ENCODE measurements at regions of chr2 and their contacts with region 1.

Region 1: GRCh38 chr2:113756355-113757137 is at the start of gene SLC35F5:
- DNase-seq: peak; percentile 98
- H3K4me3 ChIP-seq: peak within 1 kb of the TSS; percentile 82
- H3K27ac ChIP-seq: peak within 1 kb of the TSS; percentile 83
- H3K4me1 ChIP-seq: peaks cover 33% of the 10 kb centered on the region
- H3K27me3 ChIP-seq: no peaks in the 10 kb centered on the region
- total RNA-seq, gene SLC35F5: 129 and 146 TPM in 2 replicates

Region 2: DNA sequence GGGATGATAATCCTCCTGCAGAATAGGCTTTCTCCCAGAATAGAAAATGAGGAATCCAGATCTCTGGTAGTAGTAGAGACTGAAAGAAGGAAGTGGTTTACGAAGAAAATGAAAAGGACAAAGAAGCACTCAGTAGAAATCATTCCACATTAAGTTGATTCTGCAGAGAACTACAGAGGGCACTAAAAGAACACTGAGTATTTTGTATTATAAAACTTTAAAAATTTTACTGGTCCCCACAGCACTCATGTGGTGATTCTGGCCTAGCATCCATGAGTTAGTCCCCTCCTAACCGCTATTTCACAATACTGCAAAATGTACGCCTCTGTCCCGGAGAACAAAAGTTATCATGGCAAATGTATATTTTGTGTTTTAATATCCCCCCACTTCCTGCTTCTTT is 42.8 kb after region 1 on chr2:
- in situ Hi-C with region 1: no loop called
- DNase-seq: peak; percentile 63
- H3K4me3 ChIP-seq: no peak overlapping the region
- H3K27ac ChIP-seq: no peak overlapping the region
- H3K4me1 ChIP-seq: no peaks in the 10 kb centered on the region
- H3K27me3 ChIP-seq: no peaks in the 10 kb centered on the region

Region 3: DNA sequence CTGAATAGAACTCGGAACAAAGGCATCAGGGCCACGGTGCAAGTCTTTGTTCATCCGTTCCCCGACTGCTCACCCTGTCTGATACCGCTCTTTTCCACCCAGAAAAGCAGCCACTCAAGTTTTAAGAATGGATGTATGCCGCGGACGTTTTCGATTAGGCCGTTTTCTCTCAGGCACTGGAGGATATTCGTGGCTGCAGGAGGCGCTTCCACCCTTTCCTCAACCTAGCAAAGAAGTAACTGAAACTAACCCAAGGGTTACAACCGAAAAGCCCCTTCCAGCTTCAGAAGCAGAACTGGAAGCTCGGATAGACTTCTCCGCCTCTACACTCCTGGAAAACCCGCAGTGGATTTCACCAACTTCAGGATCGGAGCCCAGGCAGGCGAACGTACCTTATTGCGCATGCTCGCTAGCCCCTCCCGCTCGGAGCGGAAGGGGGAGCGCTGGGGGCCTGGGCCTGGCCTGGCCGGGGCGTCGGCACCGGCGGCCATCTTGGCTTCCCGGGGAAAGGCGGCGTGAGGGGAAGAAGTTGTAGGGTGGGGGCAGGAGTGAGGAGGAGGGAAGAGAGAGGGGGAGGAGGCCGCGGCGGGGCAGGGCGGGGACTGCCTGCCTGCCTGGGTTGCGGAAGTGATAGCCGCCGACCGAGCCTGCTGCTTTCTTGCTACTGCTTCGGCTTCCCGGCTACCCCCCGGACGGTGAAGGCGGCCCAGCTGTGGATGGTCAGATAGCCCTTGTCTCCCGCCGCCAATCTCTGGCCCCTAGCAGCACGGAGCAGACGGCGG is 133.1 kb after region 1 on chr2 and contains the start of gene ACTR3:
- in situ Hi-C with region 1: loop called (anchors 10 kb)
- DNase-seq: peak; percentile 99
- H3K4me3 ChIP-seq: peak within 1 kb of the TSS; percentile 97
- H3K27ac ChIP-seq: peak within 1 kb of the TSS; percentile 85
- H3K4me1 ChIP-seq: peaks cover 62% of the 10 kb centered on the region
- H3K27me3 ChIP-seq: no peaks in the 10 kb centered on the region
- total RNA-seq, gene ACTR3: 343 and 410 TPM in 2 replicates